ENCODE measurements at regions of chr11 and their contacts with region 1.

Region 1: DNA sequence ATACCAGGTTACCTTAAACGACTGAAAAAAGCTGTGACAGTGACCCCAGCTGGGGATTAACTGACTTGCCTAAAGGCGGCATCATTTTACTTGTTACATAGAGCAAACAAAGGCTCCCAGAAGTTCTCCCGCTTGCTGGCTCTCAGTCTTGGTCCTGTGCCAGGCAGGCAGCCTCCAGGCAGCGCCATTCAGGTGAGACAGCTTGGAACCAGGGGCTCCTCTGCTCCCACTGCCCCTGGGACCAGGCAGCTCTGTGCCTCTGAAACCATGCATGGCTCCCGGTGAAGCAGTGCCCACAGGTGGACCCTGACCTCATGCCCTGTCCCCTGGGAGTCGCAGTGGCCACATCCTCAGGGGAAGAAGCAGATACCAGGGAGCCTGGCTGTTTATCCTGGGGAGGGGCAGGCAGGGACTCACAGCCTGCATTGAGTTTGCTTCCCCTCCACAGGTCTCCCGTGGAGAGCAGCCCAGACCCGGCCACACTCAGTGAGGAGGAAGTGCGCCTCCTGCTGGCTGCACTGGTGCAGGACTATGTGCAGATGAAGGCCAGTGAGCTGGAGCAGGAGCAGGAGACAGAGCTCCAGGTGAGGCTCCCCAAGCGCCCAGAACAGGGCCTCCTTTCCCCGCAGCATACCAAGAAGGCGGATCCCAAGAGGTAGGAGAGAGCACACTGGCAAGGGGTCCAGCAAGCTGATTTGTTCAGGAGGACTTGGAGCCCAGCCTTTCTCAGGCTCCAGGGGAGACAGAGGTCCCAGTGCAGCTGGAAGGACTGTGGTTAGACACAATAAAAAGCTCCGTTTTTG is 15.6 kb upstream of the CYP2R1 start:
- DNase-seq: peak; percentile 64 to 83
- ATAC-seq: peak; percentile 40 to 75 (median 72)
- H3K4me3 ChIP-seq: no peak overlapping the region
- H3K27ac ChIP-seq: no peak overlapping the region
- H3K4me1 ChIP-seq: peaks cover 0 to 19% (median 12%) of the 10 kb centered on the region in 9 donors
- H3K27me3 ChIP-seq: peaks cover 0 to 8% (median 0%) of the 10 kb centered on the region in 7 donors
- CTCF ChIP-seq: peak; percentile 52 to 90 (median 76)

Region 2: DNA sequence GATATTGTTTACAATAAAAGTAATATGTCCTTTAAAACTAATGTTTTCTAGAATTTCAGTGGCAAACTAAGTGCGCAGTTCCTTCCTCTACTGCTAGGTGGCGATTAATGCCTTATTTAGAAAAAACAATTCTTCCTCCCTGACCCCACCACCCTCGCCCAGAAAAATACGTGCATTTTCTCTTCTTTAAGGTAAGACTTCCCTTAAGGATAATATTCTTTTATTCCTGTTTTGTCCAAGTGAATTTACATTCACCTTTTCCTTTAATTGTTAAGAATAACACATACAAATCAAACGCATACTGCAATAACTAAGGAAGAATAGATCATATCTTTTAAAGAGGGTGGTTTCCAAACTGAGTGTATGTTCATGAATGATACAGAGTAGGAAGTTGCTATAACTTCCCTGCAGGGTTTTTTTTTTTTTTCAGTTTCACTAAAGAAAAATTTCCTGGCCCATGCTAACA is 370.4 kb before region 1 on chr11:
- intact Hi-C with region 1: loop called in 9 of 10 experiments (anchors 1 to 10 kb)
- DNase-seq: peak in 1 of 2 donors; percentile 28
- ATAC-seq: no peak
- H3K4me3 ChIP-seq: peak overlapping the region in 1 of 10 donors; percentile 24
- H3K27ac ChIP-seq: peak overlapping the region in 4 of 10 donors; percentile 46 to 72 (median 58)
- H3K4me1 ChIP-seq: peaks cover 0 to 51% (median 44%) of the 10 kb centered on the region in 9 donors
- H3K27me3 ChIP-seq: no peaks in the 10 kb centered on the region
- CTCF ChIP-seq: peak; percentile 66 to 84 (median 79)

Region 3: GRCh38 chr11:14789879-14790484 is 117.6 kb before region 1 on chr11:
- intact Hi-C with region 1: loop called in 8 of 10 experiments (anchors 2 to 10 kb)
- DNase-seq: no peak
- ATAC-seq: no peak
- H3K4me3 ChIP-seq: no peak overlapping the region
- H3K27ac ChIP-seq: no peak overlapping the region
- H3K4me1 ChIP-seq: peaks cover 0 to 10% (median 0%) of the 10 kb centered on the region in 9 donors
- H3K27me3 ChIP-seq: no peaks in the 10 kb centered on the region
- CTCF ChIP-seq: peak in 7 of 9 donors; percentile 34 to 60 (median 48)

Measured in heart right ventricle (tissue), 16 donors.